ENCODE measurements at regions of chr11 and their contacts with region 1.

Region 1: GRCh38 chr11:72471005-72471898 is 36.9 kb upstream of the CLPB start:
- DNase-seq: peak; percentile 65 to 71 (median 67)
- ATAC-seq: peak; percentile 96 to 98 (median 98)
- H3K4me3 ChIP-seq: no peak overlapping the region
- H3K27ac ChIP-seq: no peak overlapping the region
- H3K4me1 ChIP-seq: peaks cover 0 to 7% (median 0%) of the 10 kb centered on the region in 4 donors
- H3K27me3 ChIP-seq: no peaks in the 10 kb centered on the region
- CTCF ChIP-seq: peak; percentile 79 to 87 (median 82)
- POLR2A ChIP-seq: no peak

Region 2: DNA sequence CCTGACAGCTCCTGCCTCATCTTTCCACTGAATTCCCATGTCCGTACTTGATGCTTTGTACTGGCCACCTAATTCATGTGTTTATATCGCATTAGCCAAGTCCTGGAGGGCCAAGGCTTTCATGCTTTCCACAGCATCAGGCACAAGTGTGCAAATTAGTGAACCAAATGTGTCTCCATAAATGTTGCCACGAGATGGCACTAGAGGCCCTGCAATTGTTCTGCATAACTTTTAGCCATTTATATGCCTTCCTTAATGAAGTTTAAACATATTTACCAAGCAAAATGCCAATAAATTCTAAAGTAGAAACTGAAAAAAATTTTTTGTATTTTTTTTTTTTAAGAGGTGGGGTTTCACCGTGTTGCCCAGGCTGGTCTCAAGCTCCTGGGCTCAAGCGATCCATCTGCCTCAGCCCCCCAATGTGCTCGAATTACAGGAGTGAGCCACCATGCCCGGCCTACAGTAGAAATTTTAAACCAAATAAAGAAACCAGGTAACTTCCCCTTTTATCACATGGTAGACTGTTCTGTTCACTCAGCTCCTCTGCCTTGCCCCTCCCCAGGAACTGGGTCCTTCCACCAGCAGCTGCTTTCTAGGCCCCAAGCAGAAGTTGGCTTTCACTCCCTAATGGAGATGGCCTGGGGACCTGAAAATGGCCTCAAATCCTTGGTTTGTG is 493.4 kb before region 1 on chr11:
- intact Hi-C with region 1: no loop called
- DNase-seq: no peak
- ATAC-seq: peak; percentile 82 to 88 (median 86)
- H3K4me3 ChIP-seq: no peak overlapping the region
- H3K27ac ChIP-seq: no peak overlapping the region
- H3K4me1 ChIP-seq: no peaks in the 10 kb centered on the region
- H3K27me3 ChIP-seq: no peaks in the 10 kb centered on the region
- CTCF ChIP-seq: peak; percentile 71 to 75 (median 74)
- POLR2A ChIP-seq: no peak

Region 3: GRCh38 chr11:72369743-72370142 is 101.5 kb before region 1 on chr11:
- intact Hi-C with region 1: no loop called
- DNase-seq: no peak
- ATAC-seq: no peak
- H3K4me3 ChIP-seq: no peak overlapping the region
- H3K27ac ChIP-seq: no peak overlapping the region
- H3K4me1 ChIP-seq: no peaks in the 10 kb centered on the region
- H3K27me3 ChIP-seq: no peaks in the 10 kb centered on the region
- CTCF ChIP-seq: no peak
- POLR2A ChIP-seq: no peak

Region 4: GRCh38 chr11:72573072-72573854 is 102.0 kb after region 1 on chr11:
- intact Hi-C with region 1: loop called (anchors 5 to 10 kb)
- DNase-seq: peak in 2 of 3 donors; percentile 41 to 49
- ATAC-seq: peak; percentile 77 to 88 (median 86)
- H3K4me3 ChIP-seq: no peak overlapping the region
- H3K27ac ChIP-seq: no peak overlapping the region
- H3K4me1 ChIP-seq: no peaks in the 10 kb centered on the region
- H3K27me3 ChIP-seq: no peaks in the 10 kb centered on the region
- CTCF ChIP-seq: peak; percentile 40 to 44 (median 42)
- POLR2A ChIP-seq: no peak

Region 5: DNA sequence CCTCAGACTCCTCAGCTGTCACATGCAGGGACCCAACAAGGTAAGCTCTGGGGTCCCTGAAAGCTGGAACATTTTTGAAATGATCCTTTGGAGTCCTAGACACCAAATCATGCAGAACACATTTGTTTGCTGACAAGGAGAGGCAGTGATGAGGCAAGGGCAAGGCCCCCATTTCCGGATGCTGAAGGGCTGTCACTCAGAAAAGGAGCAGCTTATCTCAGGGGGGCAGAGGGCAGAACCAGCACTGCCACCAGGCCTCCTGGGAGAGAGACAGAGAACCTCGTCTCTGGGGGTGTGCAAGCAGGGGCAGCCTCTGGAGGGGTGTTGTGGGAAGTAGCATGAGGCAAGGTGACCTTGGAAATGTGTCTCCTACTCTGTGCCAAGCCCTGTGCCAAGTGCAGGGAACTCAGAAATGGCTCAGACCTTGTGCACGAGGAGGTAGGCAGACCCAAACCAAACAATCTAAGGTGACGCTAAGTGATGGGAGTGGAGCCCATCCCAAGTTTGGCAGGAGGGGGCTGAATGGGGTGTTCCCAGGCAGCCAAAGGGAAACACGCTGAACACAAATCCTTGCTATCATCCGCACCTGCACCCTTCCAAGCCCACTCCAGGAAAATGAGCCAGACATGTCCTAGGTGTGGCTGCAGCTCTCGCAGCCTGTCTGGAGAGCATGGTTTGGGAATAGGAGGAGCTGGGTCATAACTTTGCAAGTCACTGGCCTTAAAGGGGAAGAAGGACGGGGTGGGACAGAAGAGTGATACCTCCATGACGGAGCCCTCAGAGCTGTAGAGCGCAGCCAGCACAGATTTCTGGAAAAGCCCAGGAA is 108.8 kb after region 1 on chr11:
- intact Hi-C with region 1: loop called (anchors 5 to 10 kb)
- DNase-seq: peak in 2 of 3 donors; percentile 24 to 31
- ATAC-seq: no peak
- H3K4me3 ChIP-seq: no peak overlapping the region
- H3K27ac ChIP-seq: no peak overlapping the region
- H3K4me1 ChIP-seq: no peaks in the 10 kb centered on the region
- H3K27me3 ChIP-seq: peaks cover 0 to 5% of the 10 kb centered on the region in 2 donors
- CTCF ChIP-seq: no peak
- POLR2A ChIP-seq: no peak

Measured in right lobe of liver (tissue), 6 donors.